ENCODE measurements at regions of chr3 and their contacts with region 1.

Region 1: GRCh38 chr3:57227204-57227929 is at the start of gene APPL1:
- DNase-seq: peak; percentile 87
- H3K4me3 ChIP-seq: peak within 1 kb of the TSS; percentile 67 to 86 (median 85)
- H3K27ac ChIP-seq: peak within 1 kb of the TSS; percentile 61
- H3K4me1 ChIP-seq: peaks cover 29% of the 10 kb centered on the region
- H3K27me3 ChIP-seq: no peaks in the 10 kb centered on the region
- CTCF ChIP-seq: peak in 1 of 2 donors; percentile 10
- total RNA-seq, gene APPL1: 34.7 to 60.7 TPM

Region 2: GRCh38 chr3:55416351-55416821 is 1811.0 kb before region 1 on chr3:
- CTCF ChIA-PET with region 1: no interaction called
- dilution Hi-C with region 1: no loop called
- in situ Hi-C with region 1: no loop called
- intact Hi-C with region 1: no loop called
- DNase-seq: peak; percentile 69
- H3K4me3 ChIP-seq: no peak overlapping the region
- H3K27ac ChIP-seq: no peak overlapping the region
- H3K4me1 ChIP-seq: peaks cover 12% of the 10 kb centered on the region
- H3K27me3 ChIP-seq: no peaks in the 10 kb centered on the region
- CTCF ChIP-seq: no peak

Region 3: DNA sequence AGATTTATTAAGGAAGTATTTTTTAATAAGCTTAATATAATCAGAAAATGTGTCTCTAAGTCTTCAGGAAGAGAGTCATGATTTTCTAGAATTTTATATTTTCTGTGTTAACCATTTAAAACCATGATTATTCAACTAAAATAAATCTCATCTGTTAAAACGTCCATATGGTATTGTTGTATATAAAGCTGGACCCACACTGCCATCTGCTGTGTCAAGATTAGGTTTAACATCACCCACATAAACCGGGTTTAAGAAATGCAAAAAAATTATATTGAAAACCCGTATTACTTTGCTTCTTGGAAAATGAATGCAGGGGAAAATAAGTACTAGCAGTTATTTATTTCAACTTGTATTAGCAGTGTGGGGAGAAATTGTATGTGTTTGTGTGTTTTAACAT is 679.9 kb before region 1 on chr3:
- CTCF ChIA-PET with region 1: no interaction called
- dilution Hi-C with region 1: no loop called
- in situ Hi-C with region 1: no loop called
- intact Hi-C with region 1: no loop called
- DNase-seq: no peak
- H3K4me3 ChIP-seq: no peak overlapping the region
- H3K27ac ChIP-seq: no peak overlapping the region
- H3K4me1 ChIP-seq: no peaks in the 10 kb centered on the region
- H3K27me3 ChIP-seq: no peaks in the 10 kb centered on the region
- CTCF ChIP-seq: peak; percentile 1 to 33

Region 4: GRCh38 chr3:57060089-57060829 is 167.1 kb before region 1 on chr3 and contains the start of gene SPATA12:
- CTCF ChIA-PET with region 1: no interaction called
- dilution Hi-C with region 1: no loop called
- in situ Hi-C with region 1: no loop called
- intact Hi-C with region 1: no loop called
- DNase-seq: peak; percentile 98
- H3K4me3 ChIP-seq: no peak within 1 kb of the TSS
- H3K27ac ChIP-seq: peak within 1 kb of the TSS; percentile 88
- H3K4me1 ChIP-seq: peaks cover 30% of the 10 kb centered on the region
- H3K27me3 ChIP-seq: no peaks in the 10 kb centered on the region
- CTCF ChIP-seq: no peak
- total RNA-seq, gene SPATA12: 0.21 TPM in 1 of 2 donors, not detected in the other

Region 5: GRCh38 chr3:57164657-57165573 is 62.5 kb before region 1 on chr3 and contains the start of gene IL17RD:
- CTCF ChIA-PET with region 1: no interaction called
- dilution Hi-C with region 1: no loop called
- in situ Hi-C with region 1: no loop called
- intact Hi-C with region 1: loop called (anchors 1 kb)
- DNase-seq: peak; percentile 61
- H3K4me3 ChIP-seq: peak within 1 kb of the TSS; percentile 70 to 77 (median 72)
- H3K27ac ChIP-seq: no peak within 1 kb of the TSS
- H3K4me1 ChIP-seq: peaks cover 22% of the 10 kb centered on the region
- H3K27me3 ChIP-seq: no peaks in the 10 kb centered on the region
- CTCF ChIP-seq: no peak
- total RNA-seq, gene IL17RD: 9.8 to 40.2 TPM